ENCODE measurements at regions of chr2 and their contacts with region 1.

Region 1: DNA sequence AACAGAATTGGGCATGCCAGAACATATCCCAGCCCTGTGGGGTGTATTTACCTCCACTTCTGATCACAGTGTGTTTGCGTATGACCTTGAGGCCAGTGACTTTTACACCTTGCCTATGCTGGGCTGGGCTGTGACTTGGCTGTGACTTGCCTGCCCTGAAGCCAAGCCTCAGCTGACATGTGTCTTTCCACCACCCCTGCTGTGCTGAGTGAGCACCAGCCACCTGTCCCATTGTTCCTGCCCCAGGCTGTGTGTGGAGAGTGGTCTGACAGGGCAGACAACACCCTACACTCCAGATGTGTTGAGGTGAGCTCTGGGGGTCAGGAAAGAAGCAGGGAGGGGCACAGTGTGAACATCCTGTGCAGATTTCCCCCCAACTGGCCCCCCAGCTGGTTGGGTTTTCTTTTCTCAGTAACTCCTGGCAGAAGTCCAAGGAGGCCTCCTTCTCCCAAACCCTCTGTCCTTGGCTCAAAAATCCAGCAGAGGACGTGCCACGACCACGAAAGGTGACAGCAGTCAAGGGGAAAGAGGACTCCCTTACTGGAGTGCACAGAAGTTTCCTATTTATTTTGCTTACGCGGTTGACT is 5.1 kb upstream of the STEAP3 start:
- DNase-seq: peak in 3 of 5 donors; percentile 57 to 79 (median 62)
- H3K4me3 ChIP-seq: no peak overlapping the region
- H3K27ac ChIP-seq: no peak overlapping the region
- H3K4me1 ChIP-seq: peaks cover 0 to 2% (median 0%) of the 10 kb centered on the region in 3 donors
- H3K27me3 ChIP-seq: no peaks in the 10 kb centered on the region
- CTCF ChIP-seq: peak; percentile 20

Region 2: DNA sequence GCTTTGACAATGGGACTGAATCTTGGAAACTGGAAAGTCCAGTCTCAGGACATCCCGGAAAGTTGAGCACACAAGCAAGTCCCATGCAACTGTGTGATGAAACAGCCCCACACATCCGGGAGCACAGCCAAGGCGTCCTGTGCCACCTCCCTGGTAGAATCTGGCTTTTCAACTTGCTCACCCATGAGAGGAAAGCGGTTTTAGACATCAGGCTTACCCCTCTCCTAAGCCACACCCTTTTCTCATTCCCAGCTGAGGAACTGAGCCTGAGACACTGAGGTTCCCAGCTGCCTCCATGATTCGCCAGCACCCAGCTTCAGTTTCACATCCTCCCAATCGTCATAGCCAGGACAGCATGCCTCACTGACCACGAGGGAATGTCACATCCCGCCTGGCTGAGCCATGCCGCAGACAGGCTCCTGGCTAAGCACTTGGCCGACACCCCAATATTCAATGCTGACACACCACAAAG is 65.3 kb after region 1 on chr2:
- intact Hi-C with region 1: loop called (anchors 10 kb)
- DNase-seq: peak in 2 of 5 donors; percentile 14 to 87
- H3K4me3 ChIP-seq: no peak overlapping the region
- H3K27ac ChIP-seq: no peak overlapping the region
- H3K4me1 ChIP-seq: no peaks in the 10 kb centered on the region
- H3K27me3 ChIP-seq: no peaks in the 10 kb centered on the region
- CTCF ChIP-seq: no peak